ENCODE measurements at regions of chr13 and their contacts with region 1.

Region 1: DNA sequence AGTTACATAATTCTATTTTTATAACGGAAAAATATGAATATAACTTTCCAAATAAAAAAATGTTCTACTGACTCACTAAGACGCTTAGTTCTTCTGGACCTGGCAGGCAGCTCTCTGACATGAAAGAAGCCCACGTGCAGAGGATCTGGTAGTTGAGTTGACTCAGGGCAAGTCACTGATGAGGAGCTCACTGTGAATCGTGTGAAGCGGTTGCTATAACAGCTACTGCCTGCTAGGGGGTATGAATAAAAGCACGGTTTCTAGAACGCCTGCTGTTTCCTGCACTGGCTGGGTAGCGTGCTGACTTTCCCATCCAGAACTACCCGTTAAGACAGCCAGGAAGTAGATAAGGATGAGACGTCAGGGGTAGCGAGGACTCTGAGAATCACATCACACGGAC is 54.7 kb upstream of the WASF3 start:
- DNase-seq: no peak
- H3K4me3 ChIP-seq: no peak overlapping the region
- H3K27ac ChIP-seq: no peak overlapping the region
- H3K4me1 ChIP-seq: no peaks in the 10 kb centered on the region
- H3K27me3 ChIP-seq: no peaks in the 10 kb centered on the region
- CTCF ChIP-seq: no peak
- EP300 ChIP-seq: no peak
- POLR2A ChIP-seq: no peak

Region 2: GRCh38 chr13:26253787-26254582 is 248.8 kb before region 1 on chr13 and contains the start of gene CDK8:
- in situ Hi-C with region 1: no loop called
- intact Hi-C with region 1: loop called (anchors 10 kb)
- DNase-seq: peak; percentile 92
- H3K4me3 ChIP-seq: peak within 1 kb of the TSS; percentile 58 to 82 (median 78)
- H3K27ac ChIP-seq: peak within 1 kb of the TSS; percentile 90 to 93 (median 92)
- H3K4me1 ChIP-seq: peaks cover 0 to 36% (median 16%) of the 10 kb centered on the region in 4 donors
- H3K27me3 ChIP-seq: no peaks in the 10 kb centered on the region
- CTCF ChIP-seq: peak in 1 of 5 experiments; percentile 6
- EP300 ChIP-seq: no peak
- POLR2A ChIP-seq: peak; percentile 84
- total RNA-seq, gene CDK8: 8.6 to 37.4 (median 22.3) TPM

Region 3: DNA sequence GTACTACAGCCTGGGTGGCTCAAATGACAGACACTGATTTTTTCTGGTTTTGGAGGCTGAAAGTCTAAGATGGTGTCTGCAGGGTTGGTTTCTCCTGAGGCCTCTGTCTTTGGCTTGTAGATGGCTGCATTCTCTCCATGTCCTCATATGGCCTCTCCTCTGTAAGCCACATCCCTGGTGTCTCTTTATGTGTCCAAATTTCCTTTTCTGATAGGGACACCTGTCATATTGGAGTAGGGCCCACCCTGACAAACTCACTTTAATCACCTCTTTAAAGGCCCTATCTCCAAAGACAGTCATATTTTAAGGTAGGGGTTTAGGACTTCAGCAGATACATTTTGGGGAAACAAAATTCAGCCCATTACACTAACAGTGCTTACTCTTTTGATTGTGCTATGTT is 22.7 kb after region 1 on chr13:
- in situ Hi-C with region 1: no loop called
- intact Hi-C with region 1: loop called (anchors 1 kb)
- DNase-seq: no peak
- H3K4me3 ChIP-seq: no peak overlapping the region
- H3K27ac ChIP-seq: no peak overlapping the region
- H3K4me1 ChIP-seq: no peaks in the 10 kb centered on the region
- H3K27me3 ChIP-seq: peaks cover 12% of the 10 kb centered on the region
- CTCF ChIP-seq: no peak
- EP300 ChIP-seq: no peak
- POLR2A ChIP-seq: no peak

Region 4: DNA sequence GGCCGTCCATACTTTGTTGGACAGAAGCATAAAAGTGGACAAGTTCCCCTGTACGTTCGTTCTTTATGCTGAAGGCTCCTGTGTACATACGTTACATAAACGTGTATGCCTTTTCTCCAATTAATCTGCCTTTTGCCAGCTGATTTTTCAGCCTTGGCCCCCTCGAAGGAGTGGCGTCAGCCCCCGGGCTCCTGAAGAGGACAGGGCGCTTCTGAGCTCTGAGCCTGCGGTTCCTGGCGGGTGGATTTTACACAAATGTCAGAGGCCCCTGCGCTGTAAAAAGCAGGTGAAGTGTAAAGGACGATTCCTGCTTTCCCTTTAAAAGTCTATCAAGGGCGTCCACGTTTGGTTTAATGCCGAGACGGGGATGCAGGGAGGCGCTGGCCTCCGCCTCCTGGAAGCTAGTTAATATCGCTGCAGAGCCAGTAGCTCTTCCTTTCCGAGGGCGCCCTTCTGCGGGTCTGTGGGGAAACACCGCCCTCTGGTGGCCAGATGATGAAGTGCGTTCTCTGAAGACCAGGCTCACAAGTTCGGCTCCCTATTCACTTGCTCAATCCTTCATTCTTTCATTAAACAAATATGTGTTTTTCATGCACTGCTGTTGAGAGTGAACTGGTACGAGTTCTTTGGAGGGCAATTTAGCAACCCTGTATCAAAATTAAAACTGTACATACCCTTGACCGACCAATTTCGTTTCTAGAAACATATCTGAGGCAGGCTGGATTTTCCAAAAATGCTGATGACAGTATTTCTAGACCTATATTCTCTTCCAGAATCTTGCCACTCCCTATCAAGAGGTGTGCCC is 195.8 kb after region 1 on chr13:
- in situ Hi-C with region 1: loop called in 1 of 4 experiments (anchors 25 kb)
- intact Hi-C with region 1: no loop called
- DNase-seq: peak; percentile 85
- H3K4me3 ChIP-seq: no peak overlapping the region
- H3K27ac ChIP-seq: no peak overlapping the region
- H3K4me1 ChIP-seq: peaks cover 0 to 5% (median 2%) of the 10 kb centered on the region in 4 donors
- H3K27me3 ChIP-seq: peaks cover 6% of the 10 kb centered on the region
- CTCF ChIP-seq: peak; percentile 93 to 97 (median 96)
- EP300 ChIP-seq: no peak
- POLR2A ChIP-seq: no peak

Measured in transverse colon (tissue), 4 donors.